Thyroid gland (tissue), 4 donors: ENCODE measurements at regions of chr12 and their contacts with region 1.

Region 1: GRCh38 chr12:77724367-77724957 is 106.2 kb upstream of the NAV3 start:
- DNase-seq: no peak
- H3K4me3 ChIP-seq: no peak overlapping the region
- H3K27ac ChIP-seq: no peak overlapping the region
- H3K4me1 ChIP-seq: no peaks in the 10 kb centered on the region
- H3K27me3 ChIP-seq: no peaks in the 10 kb centered on the region
- CTCF ChIP-seq: peak in 3 of 6 experiments; percentile 11 to 23 (median 17)
- POLR2A ChIP-seq: no peak

Region 2: GRCh38 chr12:77204091-77204490 is 520.4 kb before region 1 on chr12:
- intact Hi-C with region 1: no loop called
- DNase-seq: no peak
- H3K4me3 ChIP-seq: no peak overlapping the region
- H3K27ac ChIP-seq: no peak overlapping the region
- H3K4me1 ChIP-seq: no peaks in the 10 kb centered on the region
- H3K27me3 ChIP-seq: no peaks in the 10 kb centered on the region
- CTCF ChIP-seq: no peak
- POLR2A ChIP-seq: no peak

Region 3: GRCh38 chr12:77777274-77777673 is 52.8 kb after region 1 on chr12:
- intact Hi-C with region 1: no loop called
- DNase-seq: no peak
- H3K4me3 ChIP-seq: no peak overlapping the region
- H3K27ac ChIP-seq: no peak overlapping the region
- H3K4me1 ChIP-seq: no peaks in the 10 kb centered on the region
- H3K27me3 ChIP-seq: no peaks in the 10 kb centered on the region
- CTCF ChIP-seq: no peak
- POLR2A ChIP-seq: no peak

Region 4: DNA sequence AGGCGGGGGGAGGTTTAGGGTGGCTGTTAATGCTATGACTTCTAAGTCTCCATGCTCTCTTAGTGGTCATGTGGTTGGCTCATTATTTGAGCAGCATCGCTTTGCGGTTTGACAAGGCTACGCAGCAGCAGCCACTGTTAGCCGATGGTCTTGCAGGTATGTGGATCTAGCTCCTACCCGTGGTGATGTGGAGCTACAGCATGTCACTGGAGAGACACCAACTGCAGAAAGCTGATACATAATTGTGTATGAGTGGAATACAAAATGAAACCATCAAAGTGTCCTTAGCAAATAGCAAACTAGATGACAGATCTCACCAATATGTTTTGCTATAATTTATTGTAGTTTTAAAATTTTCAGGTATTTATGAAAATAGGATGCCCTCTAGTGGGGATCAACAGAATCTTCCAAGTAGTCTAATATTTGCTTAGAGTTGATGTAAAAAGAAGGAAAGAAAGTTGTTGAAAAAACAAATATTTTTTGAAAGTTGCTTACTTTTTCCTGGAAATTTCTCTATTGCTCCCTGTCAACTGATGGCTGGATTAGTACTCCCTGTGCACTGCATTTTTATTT is 201.2 kb after region 1 on chr12:
- intact Hi-C with region 1: loop called (anchors 10 kb)
- DNase-seq: peak; percentile 30 to 41
- H3K4me3 ChIP-seq: no peak overlapping the region
- H3K27ac ChIP-seq: no peak overlapping the region
- H3K4me1 ChIP-seq: no peaks in the 10 kb centered on the region
- H3K27me3 ChIP-seq: no peaks in the 10 kb centered on the region
- CTCF ChIP-seq: peak in 4 of 6 experiments; percentile 56 to 74 (median 64)
- POLR2A ChIP-seq: no peak